Calu3 (cell line): ENCODE measurements at regions of chr2 and their contacts with region 1.

Region 1: GRCh38 chr2:6139916-6140315 is 447.7 kb downstream of the SOX11 start:
- DNase-seq: no peak
- H3K4me3 Mint-ChIP-seq: no peak overlapping the region
- H3K27ac Mint-ChIP-seq: no peak overlapping the region
- H3K4me1 Mint-ChIP-seq: no peaks in the 10 kb centered on the region
- H3K27me3 Mint-ChIP-seq: no peaks in the 10 kb centered on the region
- CTCF ChIP-seq: no peak

Region 2: GRCh38 chr2:6054161-6054671 is 85.7 kb before region 1 on chr2:
- CTCF ChIA-PET with region 1: no interaction called
- intact Hi-C with region 1: no loop called
- DNase-seq: no peak
- H3K4me3 Mint-ChIP-seq: no peak overlapping the region
- H3K27ac Mint-ChIP-seq: no peak overlapping the region
- H3K4me1 Mint-ChIP-seq: no peaks in the 10 kb centered on the region
- H3K27me3 Mint-ChIP-seq: no peaks in the 10 kb centered on the region
- CTCF ChIP-seq: no peak

Region 3: GRCh38 chr2:6080932-6081753 is 58.8 kb before region 1 on chr2:
- CTCF ChIA-PET with region 1: no interaction called
- intact Hi-C with region 1: no loop called
- DNase-seq: no peak
- H3K4me3 Mint-ChIP-seq: no peak overlapping the region
- H3K27ac Mint-ChIP-seq: no peak overlapping the region
- H3K4me1 Mint-ChIP-seq: peaks cover 21% of the 10 kb centered on the region
- H3K27me3 Mint-ChIP-seq: no peaks in the 10 kb centered on the region
- CTCF ChIP-seq: no peak

Region 4: DNA sequence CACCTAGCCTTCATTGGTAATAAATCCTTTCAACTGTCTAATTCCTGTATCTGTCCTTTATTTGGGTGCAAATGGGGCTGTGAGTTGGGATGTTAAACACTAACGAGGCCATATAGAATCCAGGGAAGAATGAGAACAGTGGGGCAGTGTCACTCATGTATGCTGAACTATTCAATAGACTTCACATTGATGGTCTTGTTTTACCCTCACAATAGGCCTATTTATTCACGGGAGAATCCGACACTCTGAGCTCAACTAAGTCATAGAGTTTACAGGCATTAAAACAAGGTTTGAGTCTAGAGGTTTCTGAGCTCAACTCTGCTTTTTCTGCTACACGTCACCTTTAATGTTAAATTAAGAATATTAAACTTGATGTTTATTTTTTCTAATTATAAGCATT is 26.1 kb before region 1 on chr2:
- CTCF ChIA-PET with region 1: no interaction called
- intact Hi-C with region 1: loop called (anchors 1 kb)
- DNase-seq: no peak
- H3K4me3 Mint-ChIP-seq: no peak overlapping the region
- H3K27ac Mint-ChIP-seq: no peak overlapping the region
- H3K4me1 Mint-ChIP-seq: no peaks in the 10 kb centered on the region
- H3K27me3 Mint-ChIP-seq: no peaks in the 10 kb centered on the region
- CTCF ChIP-seq: no peak

Region 5: GRCh38 chr2:6168485-6168884 is 28.6 kb after region 1 on chr2:
- CTCF ChIA-PET with region 1: no interaction called
- intact Hi-C with region 1: loop called (anchors 2 kb)
- DNase-seq: no peak
- H3K4me3 Mint-ChIP-seq: no peak overlapping the region
- H3K27ac Mint-ChIP-seq: no peak overlapping the region
- H3K4me1 Mint-ChIP-seq: no peaks in the 10 kb centered on the region
- H3K27me3 Mint-ChIP-seq: peaks cover 14% of the 10 kb centered on the region
- CTCF ChIP-seq: no peak